ENCODE measurements at regions of chr5 and their contacts with region 1.

Region 1: GRCh38 chr5:180810210-180810958 is 7.8 kb upstream of the MGAT1 start:
- DNase-seq: peak; percentile 94 to 99 (median 98)
- ATAC-seq: peak; percentile 86
- H3K4me3 ChIP-seq: peak overlapping the region; percentile 88
- H3K4me3 Mint-ChIP-seq: peak overlapping the region; percentile 83 to 99 (median 92)
- H3K27ac ChIP-seq: peak overlapping the region; percentile 96
- H3K27ac Mint-ChIP-seq: peak overlapping the region; percentile 91 to 100 (median 98)
- H3K4me1 ChIP-seq: peaks cover 38 to 47% of the 10 kb centered on the region in 2 donors
- H3K4me1 Mint-ChIP-seq: peaks cover 56 to 84% (median 75%) of the 10 kb centered on the region in 7 donors
- H3K27me3 ChIP-seq: no peaks in the 10 kb centered on the region
- H3K27me3 Mint-ChIP-seq: peaks cover 0 to 4% (median 0%) of the 10 kb centered on the region in 5 donors

Region 2: DNA sequence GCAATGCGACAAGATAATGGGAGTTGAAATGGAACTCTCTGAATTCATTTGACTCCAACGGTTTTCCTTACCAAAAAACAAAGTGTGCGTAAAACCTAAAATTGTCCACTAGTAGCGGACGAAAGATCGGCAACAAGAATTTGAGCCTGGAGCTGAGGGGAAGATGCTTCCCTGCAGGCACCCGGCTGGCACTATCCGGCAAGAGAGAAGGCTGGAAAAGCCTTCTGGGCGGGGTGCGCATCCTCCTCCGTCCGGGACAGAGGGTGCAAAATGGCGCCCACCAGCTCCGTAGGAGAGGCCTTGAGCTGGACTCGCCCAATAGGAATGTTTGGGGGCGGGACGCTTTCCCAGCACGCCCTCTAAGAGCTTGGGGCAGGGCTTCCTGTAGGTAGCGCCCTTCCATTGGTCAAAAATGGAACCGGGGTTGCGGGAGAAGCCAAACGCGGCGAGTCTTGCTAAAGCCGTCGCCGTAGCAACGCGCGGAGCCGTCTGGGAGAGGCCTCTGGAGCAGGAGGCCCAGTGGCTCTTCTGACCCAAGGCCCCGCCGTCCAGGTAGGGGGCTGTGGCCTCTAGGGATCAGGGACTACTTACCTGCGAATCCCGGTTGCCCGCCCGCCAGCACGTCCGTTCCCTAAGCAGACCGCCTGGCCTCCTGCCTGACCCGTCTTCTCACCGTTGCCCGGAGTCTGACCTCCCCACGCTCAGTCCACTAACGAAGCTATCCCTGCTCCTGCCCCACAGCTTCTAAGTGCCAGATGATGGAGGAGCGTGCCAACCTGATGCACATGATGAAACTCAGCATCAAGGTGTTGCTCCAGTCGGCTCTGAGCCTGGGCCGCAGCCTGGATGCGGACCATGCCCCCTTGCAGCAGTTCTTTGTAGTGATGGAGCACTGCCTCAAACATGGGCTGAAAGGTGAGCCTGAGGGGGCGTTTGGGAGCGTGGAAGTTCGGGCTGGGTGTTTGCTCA is 1250.8 kb before region 1 on chr5:
- CTCF ChIA-PET with region 1: no interaction called
- POLR2A ChIA-PET with region 1: no interaction called
- intact Hi-C with region 1: loop called in 1 of 2 experiments (anchors 2 kb)
- DNase-seq: peak; percentile 77 to 97 (median 86)
- ATAC-seq: peak; percentile 100
- H3K4me3 ChIP-seq: peak overlapping the region; percentile 75
- H3K4me3 Mint-ChIP-seq: peak overlapping the region; percentile 85 to 95 (median 91)
- H3K27ac ChIP-seq: peak overlapping the region; percentile 70
- H3K27ac Mint-ChIP-seq: peak overlapping the region; percentile 81 to 96 (median 93)
- H3K4me1 ChIP-seq: peaks cover 3 to 4% of the 10 kb centered on the region in 2 donors
- H3K4me1 Mint-ChIP-seq: peaks cover 11 to 46% (median 32%) of the 10 kb centered on the region in 7 donors
- H3K27me3 ChIP-seq: no peaks in the 10 kb centered on the region
- H3K27me3 Mint-ChIP-seq: no peaks in the 10 kb centered on the region

Region 3: DNA sequence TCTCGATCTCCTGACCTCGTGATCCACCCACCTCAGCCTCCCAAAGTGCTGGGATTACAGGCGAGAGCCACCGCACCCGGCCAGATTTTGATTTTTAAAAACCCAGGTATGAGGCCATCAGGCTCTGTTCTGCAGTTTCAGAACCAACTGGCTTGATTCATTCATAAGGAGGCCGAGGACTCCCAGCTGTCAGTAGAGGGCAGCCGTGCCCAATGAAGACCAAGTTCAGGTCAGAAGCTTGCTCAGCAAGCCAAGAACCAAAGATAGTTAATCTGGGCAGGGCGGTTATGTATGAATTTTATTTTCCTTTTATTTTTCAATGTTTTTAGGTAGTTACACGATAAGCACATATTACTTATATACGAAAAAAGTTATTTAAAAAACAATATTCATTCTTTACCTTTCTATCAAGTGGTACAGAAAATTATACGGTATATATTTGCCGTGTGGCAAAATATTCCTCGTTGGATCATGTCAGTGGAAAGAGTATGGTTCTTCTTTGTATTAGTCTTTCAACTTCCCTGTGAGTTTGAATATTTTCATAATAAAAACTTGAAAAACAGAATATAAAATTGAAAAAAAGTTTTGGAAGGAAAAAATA is 25.8 kb before region 1 on chr5:
- CTCF ChIA-PET with region 1: interaction called, 4 read pairs
- POLR2A ChIA-PET with region 1: interaction called, 13 read pairs
- intact Hi-C with region 1: loop called in 1 of 2 experiments (anchors 1 kb)
- DNase-seq: peak; percentile 45 to 78 (median 65)
- ATAC-seq: peak; percentile 87
- H3K4me3 ChIP-seq: no peak overlapping the region
- H3K4me3 Mint-ChIP-seq: no peak overlapping the region
- H3K27ac ChIP-seq: no peak overlapping the region
- H3K27ac Mint-ChIP-seq: peak overlapping the region in 6 of 9 donors; percentile 8 to 76 (median 33)
- H3K4me1 ChIP-seq: peaks cover 0 to 7% of the 10 kb centered on the region in 2 donors
- H3K4me1 Mint-ChIP-seq: peaks cover 23 to 58% (median 46%) of the 10 kb centered on the region in 7 donors
- H3K27me3 ChIP-seq: no peaks in the 10 kb centered on the region
- H3K27me3 Mint-ChIP-seq: no peaks in the 10 kb centered on the region

Region 4: DNA sequence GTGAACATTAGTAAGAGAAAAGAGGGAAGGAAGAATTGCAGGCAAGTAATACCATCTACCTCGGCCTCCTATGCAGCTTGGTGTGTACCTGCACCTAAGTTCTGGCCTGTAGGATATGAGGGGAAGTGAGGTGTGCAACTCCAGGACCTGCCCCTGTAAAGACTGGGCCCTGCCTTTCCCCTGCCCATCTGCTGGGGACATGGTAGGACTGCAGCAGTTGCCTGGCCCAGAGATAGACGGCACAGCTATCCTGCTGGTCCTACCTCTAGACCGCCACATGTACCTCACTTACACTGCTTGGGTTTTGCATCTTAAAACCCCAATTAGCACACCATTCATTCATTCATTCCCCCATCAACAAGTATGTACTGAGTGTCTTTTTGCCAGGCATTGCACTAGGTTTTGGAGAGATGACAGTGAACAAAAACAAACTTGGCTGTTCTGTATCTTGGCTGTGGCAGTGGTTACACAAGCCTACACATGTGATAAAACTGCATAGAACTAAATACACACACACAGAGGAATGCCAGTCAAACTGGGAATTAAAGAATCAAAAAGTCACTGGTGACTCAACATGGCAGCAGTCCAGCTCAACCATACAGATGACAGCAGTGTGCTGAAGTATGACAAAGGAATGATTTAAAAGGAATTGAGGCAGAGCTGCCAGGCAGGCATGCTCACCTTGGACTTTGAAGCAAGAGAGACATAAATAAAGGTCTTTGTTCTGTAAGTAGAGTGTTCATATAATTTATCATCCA is 15.6 kb after region 1 on chr5:
- CTCF ChIA-PET with region 1: interaction called, 9 read pairs
- POLR2A ChIA-PET with region 1: interaction called, 273 read pairs
- intact Hi-C with region 1: loop called (anchors 1 kb)
- DNase-seq: no peak
- ATAC-seq: no peak
- H3K4me3 ChIP-seq: no peak overlapping the region
- H3K4me3 Mint-ChIP-seq: peak overlapping the region in 2 of 10 donors; percentile 8 to 30
- H3K27ac ChIP-seq: no peak overlapping the region
- H3K27ac Mint-ChIP-seq: peak overlapping the region in 4 of 9 donors; percentile 17 to 80 (median 60)
- H3K4me1 ChIP-seq: peaks cover 12 to 14% of the 10 kb centered on the region in 2 donors
- H3K4me1 Mint-ChIP-seq: peaks cover 31 to 58% (median 44%) of the 10 kb centered on the region in 7 donors
- H3K27me3 ChIP-seq: no peaks in the 10 kb centered on the region
- H3K27me3 Mint-ChIP-seq: no peaks in the 10 kb centered on the region

Region 5: GRCh38 chr5:180860887-180861822 is 50.8 kb after region 1 on chr5 and contains the start of gene ZFP62:
- CTCF ChIA-PET with region 1: no interaction called
- POLR2A ChIA-PET with region 1: interaction called, 6 read pairs
- intact Hi-C with region 1: loop called (anchors 1 kb)
- DNase-seq: peak; percentile 66 to 90 (median 82)
- ATAC-seq: peak; percentile 92
- H3K4me3 ChIP-seq: peak within 1 kb of the TSS; percentile 100
- H3K4me3 Mint-ChIP-seq: peak within 1 kb of the TSS; percentile 88 to 96 (median 91)
- H3K27ac ChIP-seq: peak within 1 kb of the TSS; percentile 83
- H3K27ac Mint-ChIP-seq: peak within 1 kb of the TSS; percentile 82 to 96 (median 94)
- H3K4me1 ChIP-seq: peaks cover 8 to 9% of the 10 kb centered on the region in 2 donors
- H3K4me1 Mint-ChIP-seq: peaks cover 19 to 32% (median 24%) of the 10 kb centered on the region in 7 donors
- H3K27me3 ChIP-seq: no peaks in the 10 kb centered on the region
- H3K27me3 Mint-ChIP-seq: peaks cover 0 to 10% (median 0%) of the 10 kb centered on the region in 5 donors
- total RNA-seq, gene ZFP62: 25.9 to 80.4 (median 36.4) TPM

Region 6: GRCh38 chr5:181217111-181217802 is 406.9 kb after region 1 on chr5:
- CTCF ChIA-PET with region 1: no interaction called
- POLR2A ChIA-PET with region 1: interaction called, 7 read pairs
- intact Hi-C with region 1: loop called in 1 of 2 experiments (anchors 1 kb)
- DNase-seq: peak; percentile 35 to 73 (median 63)
- ATAC-seq: peak; percentile 34
- H3K4me3 ChIP-seq: peak overlapping the region; percentile 85
- H3K4me3 Mint-ChIP-seq: peak overlapping the region; percentile 91 to 100 (median 94)
- H3K27ac ChIP-seq: peak overlapping the region; percentile 74
- H3K27ac Mint-ChIP-seq: peak overlapping the region; percentile 89 to 100 (median 96)
- H3K4me1 ChIP-seq: peaks cover 17 to 29% of the 10 kb centered on the region in 2 donors
- H3K4me1 Mint-ChIP-seq: peaks cover 15 to 62% (median 49%) of the 10 kb centered on the region in 7 donors
- H3K27me3 ChIP-seq: no peaks in the 10 kb centered on the region
- H3K27me3 Mint-ChIP-seq: peaks cover 0 to 12% (median 0%) of the 10 kb centered on the region in 5 donors

Region 7: GRCh38 chr5:181243512-181244343 is 433.3 kb after region 1 on chr5 and contains the start of gene RACK1:
- CTCF ChIA-PET with region 1: no interaction called
- POLR2A ChIA-PET with region 1: interaction called, 6 read pairs
- intact Hi-C with region 1: loop called in 1 of 2 experiments (anchors 5 kb)
- DNase-seq: peak; percentile 77 to 93 (median 91)
- ATAC-seq: peak; percentile 83
- H3K4me3 ChIP-seq: peak within 1 kb of the TSS; percentile 99
- H3K4me3 Mint-ChIP-seq: peak within 1 kb of the TSS; percentile 91 to 99 (median 98)
- H3K27ac ChIP-seq: peak within 1 kb of the TSS; percentile 91
- H3K27ac Mint-ChIP-seq: peak within 1 kb of the TSS; percentile 93 to 100 (median 97)
- H3K4me1 ChIP-seq: peaks cover 39 to 46% of the 10 kb centered on the region in 2 donors
- H3K4me1 Mint-ChIP-seq: peaks cover 45 to 78% (median 66%) of the 10 kb centered on the region in 7 donors
- H3K27me3 ChIP-seq: no peaks in the 10 kb centered on the region
- H3K27me3 Mint-ChIP-seq: no peaks in the 10 kb centered on the region
- total RNA-seq, gene RACK1: 1,703 to 2,739 (median 2,322) TPM

Measured in naive thymus-derived CD4-positive, alpha-beta T cell (primary cell).